ENCODE measurements at regions of chr4 and their contacts with region 1.

Region 1: GRCh38 chr4:165464813-165465381 is 86.1 kb downstream of the CPE start:
- DNase-seq: peak; percentile 51

Region 2: DNA sequence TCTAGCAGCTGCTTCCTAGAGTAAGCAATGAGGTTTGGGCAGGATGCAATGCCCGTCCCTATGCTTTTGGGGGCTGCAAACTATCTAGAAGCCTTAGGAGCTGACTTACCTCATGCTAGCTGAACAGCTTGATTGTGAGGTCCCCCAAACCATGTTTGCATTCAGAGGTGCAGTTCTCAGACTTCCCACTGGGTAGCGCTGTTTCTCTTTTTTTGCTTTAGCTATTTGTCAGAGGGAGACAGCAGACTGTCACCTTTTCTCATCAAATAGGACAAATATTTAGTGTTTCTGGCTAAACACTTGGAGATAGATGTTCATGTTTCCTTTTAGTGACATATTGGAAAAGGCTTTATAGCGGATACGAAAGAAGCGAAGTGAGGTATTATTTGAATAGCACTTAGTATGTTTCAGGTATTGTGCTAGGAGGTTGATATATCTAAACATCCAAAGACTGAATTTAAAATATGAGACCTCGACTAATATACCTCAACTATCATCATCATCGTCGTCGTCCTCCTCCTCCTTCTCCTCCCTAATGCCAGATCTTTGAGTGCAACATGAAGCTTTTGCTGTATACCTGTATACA is 333.6 kb before region 1 on chr4:
- in situ Hi-C with region 1: loop called (anchors 10 kb)
- DNase-seq: peak; percentile 79

Region 3: GRCh38 chr4:165312506-165312905 is 152.4 kb before region 1 on chr4:
- in situ Hi-C with region 1: no loop called
- DNase-seq: no peak